ENCODE measurements at regions of chr1 and their contacts with region 1.

Region 1: GRCh38 chr1:241998412-241998921 is 431 bp downstream of the MAP1LC3C start:
- DNase-seq: peak; percentile 93
- H3K4me3 Mint-ChIP-seq: peak overlapping the region; percentile 62
- H3K27ac Mint-ChIP-seq: no peak overlapping the region
- H3K4me1 Mint-ChIP-seq: peaks cover 7% of the 10 kb centered on the region
- H3K27me3 Mint-ChIP-seq: no peaks in the 10 kb centered on the region
- CTCF ChIP-seq: peak; percentile 89

Region 2: DNA sequence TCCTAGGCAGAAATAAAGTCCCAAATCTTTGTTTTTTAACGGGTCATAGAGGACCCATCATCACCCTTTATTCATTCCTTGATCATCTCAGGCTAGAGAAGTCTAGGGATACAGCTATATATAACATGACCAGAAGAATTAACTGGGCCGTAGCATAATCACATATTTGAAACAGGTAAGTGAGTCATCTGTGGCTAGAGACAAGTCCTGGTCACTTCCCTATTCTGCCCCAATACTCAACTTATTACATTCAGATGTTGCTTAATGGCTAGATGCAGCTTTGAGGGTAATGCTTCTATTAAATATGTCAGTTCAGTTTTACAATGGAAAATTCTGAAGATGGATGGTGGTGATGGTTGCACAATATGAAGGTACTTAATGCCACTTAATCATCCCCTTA is 103.5 kb before region 1 on chr1:
- CTCF ChIA-PET with region 1: interaction called, 108 read pairs
- POLR2A ChIA-PET with region 1: interaction called, 7 read pairs
- intact Hi-C with region 1: loop called (anchors 1 kb)
- DNase-seq: no peak
- H3K4me3 Mint-ChIP-seq: no peak overlapping the region
- H3K27ac Mint-ChIP-seq: no peak overlapping the region
- H3K4me1 Mint-ChIP-seq: no peaks in the 10 kb centered on the region
- H3K27me3 Mint-ChIP-seq: no peaks in the 10 kb centered on the region
- CTCF ChIP-seq: no peak

Region 3: DNA sequence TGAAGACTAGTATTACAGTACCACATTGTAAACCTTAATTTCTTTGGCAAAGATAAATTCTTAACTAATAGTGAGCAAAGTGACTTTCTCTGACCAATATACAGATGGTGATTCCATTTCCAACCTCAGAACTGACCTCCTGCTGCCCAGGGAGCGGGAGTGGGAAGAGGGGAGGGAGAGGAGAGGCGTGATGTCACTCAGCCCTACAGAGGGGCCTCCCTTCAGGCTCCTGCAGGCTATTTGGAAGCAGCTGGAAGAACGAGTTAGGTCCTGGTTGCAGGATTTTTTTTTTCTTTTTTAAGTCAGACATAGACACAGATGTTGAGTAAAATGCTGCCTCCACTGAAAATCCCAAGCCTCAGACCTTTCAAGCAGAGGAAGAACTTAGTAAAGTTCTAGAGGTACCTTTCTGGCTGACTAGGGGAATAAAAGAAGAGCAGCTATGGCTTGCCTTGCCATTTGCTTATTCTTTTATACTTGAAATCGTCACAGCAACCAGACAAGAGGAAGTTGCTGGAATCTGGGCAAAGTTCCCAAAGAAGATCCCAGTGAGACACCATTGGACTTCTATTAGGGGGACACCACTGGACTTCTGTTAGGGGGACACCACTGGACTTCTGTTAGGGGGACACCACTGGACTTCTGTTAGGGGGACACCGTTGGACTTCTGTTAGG is 95.9 kb before region 1 on chr1:
- CTCF ChIA-PET with region 1: interaction called, 108 read pairs
- POLR2A ChIA-PET with region 1: no interaction called
- intact Hi-C with region 1: no loop called
- DNase-seq: no peak
- H3K4me3 Mint-ChIP-seq: no peak overlapping the region
- H3K27ac Mint-ChIP-seq: no peak overlapping the region
- H3K4me1 Mint-ChIP-seq: no peaks in the 10 kb centered on the region
- H3K27me3 Mint-ChIP-seq: no peaks in the 10 kb centered on the region
- CTCF ChIP-seq: no peak

Region 4: GRCh38 chr1:241976229-241976628 is 22.2 kb before region 1 on chr1:
- CTCF ChIA-PET with region 1: interaction called, 10 read pairs
- POLR2A ChIA-PET with region 1: interaction called, 3 read pairs
- intact Hi-C with region 1: no loop called
- DNase-seq: no peak
- H3K4me3 Mint-ChIP-seq: no peak overlapping the region
- H3K27ac Mint-ChIP-seq: no peak overlapping the region
- H3K4me1 Mint-ChIP-seq: no peaks in the 10 kb centered on the region
- H3K27me3 Mint-ChIP-seq: no peaks in the 10 kb centered on the region
- CTCF ChIP-seq: no peak

Region 5: GRCh38 chr1:242011894-242012660 is 13.6 kb after region 1 on chr1:
- CTCF ChIA-PET with region 1: interaction called, 44 read pairs
- POLR2A ChIA-PET with region 1: no interaction called
- intact Hi-C with region 1: no loop called
- DNase-seq: no peak
- H3K4me3 Mint-ChIP-seq: no peak overlapping the region
- H3K27ac Mint-ChIP-seq: no peak overlapping the region
- H3K4me1 Mint-ChIP-seq: no peaks in the 10 kb centered on the region
- H3K27me3 Mint-ChIP-seq: no peaks in the 10 kb centered on the region
- CTCF ChIP-seq: no peak

Measured in MCF 10A (cell line).